ENCODE measurements at regions of chr17 and their contacts with region 1.

Region 1: DNA sequence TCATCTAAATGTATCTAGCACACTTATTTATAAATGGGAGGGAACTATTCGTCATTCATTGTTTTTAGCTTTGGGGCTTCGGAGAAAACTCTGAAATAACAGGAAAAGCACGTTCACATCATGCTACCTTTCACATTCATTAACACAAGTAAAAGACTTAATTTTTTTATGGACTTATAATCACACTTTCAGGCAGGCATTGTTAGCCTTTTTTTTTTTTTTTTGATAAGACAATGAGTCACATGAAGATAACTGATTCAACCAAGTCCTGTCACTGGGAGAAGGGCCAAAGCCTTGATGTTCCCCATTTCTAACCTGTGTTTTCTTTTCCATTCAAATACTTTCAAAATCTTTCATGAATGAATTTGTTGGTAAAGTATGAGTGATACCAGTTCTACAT is 631.3 kb upstream of the CA10 start:
- DNase-seq: no peak
- H3K4me3 ChIP-seq: no peak overlapping the region
- H3K27ac ChIP-seq: no peak overlapping the region
- H3K4me1 ChIP-seq: no peaks in the 10 kb centered on the region
- H3K27me3 ChIP-seq: no peaks in the 10 kb centered on the region
- CTCF ChIP-seq: no peak
- EP300 ChIP-seq: no peak
- POLR2A ChIP-seq: no peak

Region 2: GRCh38 chr17:52721910-52722309 is 67.9 kb before region 1 on chr17:
- intact Hi-C with region 1: loop called (anchors 10 kb)
- DNase-seq: no peak
- H3K4me3 ChIP-seq: no peak overlapping the region
- H3K27ac ChIP-seq: no peak overlapping the region
- H3K4me1 ChIP-seq: no peaks in the 10 kb centered on the region
- H3K27me3 ChIP-seq: no peaks in the 10 kb centered on the region
- CTCF ChIP-seq: no peak
- EP300 ChIP-seq: no peak
- POLR2A ChIP-seq: no peak